PC-3 (cell line): ENCODE measurements at regions of chr3 and their contacts with region 1.

Region 1: DNA sequence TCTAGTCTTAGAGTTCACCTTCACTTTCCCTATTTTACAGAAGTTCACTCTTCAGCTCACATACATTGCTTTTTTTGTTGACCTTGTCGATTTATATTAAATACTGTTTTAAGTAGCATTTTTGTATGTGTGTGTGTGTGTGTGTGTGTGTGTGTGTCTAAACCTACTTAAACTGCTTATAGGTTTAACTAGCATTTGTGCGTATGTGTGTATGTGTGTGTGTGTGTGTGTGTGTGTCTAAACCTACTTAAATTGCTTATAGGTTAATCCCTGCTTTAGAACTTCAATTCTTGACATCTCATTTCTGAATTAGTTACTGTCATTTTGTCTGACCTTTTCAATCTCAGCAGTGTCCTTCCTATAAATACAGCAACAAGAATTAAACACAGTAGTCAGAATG is 254.8 kb upstream of the EPHA3 start:
- DNase-seq: no peak
- ATAC-seq: no peak
- H3K4me3 ChIP-seq: no peak overlapping the region
- H3K27ac ChIP-seq: no peak overlapping the region
- H3K4me1 ChIP-seq: no peaks in the 10 kb centered on the region
- H3K27me3 ChIP-seq: peaks cover 9% of the 10 kb centered on the region
- CTCF ChIP-seq: no peak

Region 2: DNA sequence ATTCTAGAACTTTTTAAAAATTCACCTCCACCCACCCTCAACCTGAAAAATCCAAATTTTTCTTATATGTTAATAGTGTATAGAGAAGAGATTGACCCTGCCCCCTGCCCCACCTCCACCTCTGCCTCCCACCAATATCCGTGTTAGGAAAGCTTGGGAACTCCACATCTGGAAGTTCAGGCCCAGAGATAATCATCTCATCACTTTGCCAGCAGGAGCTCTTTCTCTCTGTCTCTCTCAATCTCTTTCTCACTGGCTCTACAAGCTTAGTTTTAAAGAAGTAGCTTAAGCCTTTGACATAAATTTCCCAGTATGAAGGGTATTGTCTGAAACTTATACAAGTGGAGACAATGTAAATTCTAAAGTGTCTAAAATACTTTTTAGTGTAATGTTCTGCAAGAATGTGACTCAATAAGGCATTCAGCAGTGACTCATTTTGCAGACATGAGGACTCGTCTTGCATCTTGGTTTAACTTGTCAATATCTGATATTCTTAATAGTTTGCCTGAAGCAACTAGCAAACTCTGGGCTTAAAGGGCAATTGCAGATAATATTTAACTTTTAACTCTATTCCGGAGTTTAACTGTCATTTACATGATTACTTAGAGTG is 45.0 kb before region 1 on chr3:
- CTCF ChIA-PET with region 1: no interaction called
- POLR2A ChIA-PET with region 1: no interaction called
- intact Hi-C with region 1: loop called (anchors 10 kb)
- DNase-seq: peak; percentile 45
- ATAC-seq: peak; percentile 37
- H3K4me3 ChIP-seq: no peak overlapping the region
- H3K27ac ChIP-seq: no peak overlapping the region
- H3K4me1 ChIP-seq: no peaks in the 10 kb centered on the region
- H3K27me3 ChIP-seq: no peaks in the 10 kb centered on the region
- CTCF ChIP-seq: no peak